ENCODE measurements at regions of chr2 and their contacts with region 1.

Region 1: GRCh38 chr2:27016801-27017325 is 15.9 kb upstream of the TMEM214 start:
- DNase-seq: peak; percentile 77
- ATAC-seq: peak; percentile 62
- H3K4me3 ChIP-seq: no peak overlapping the region
- H3K27ac ChIP-seq: no peak overlapping the region
- H3K4me1 ChIP-seq: peaks cover 18% of the 10 kb centered on the region
- H3K27me3 ChIP-seq: no peaks in the 10 kb centered on the region
- CTCF ChIP-seq: peak; percentile 83
- POLR2A ChIP-seq: no peak
- RAD21 ChIP-seq: peak; percentile 92

Region 2: DNA sequence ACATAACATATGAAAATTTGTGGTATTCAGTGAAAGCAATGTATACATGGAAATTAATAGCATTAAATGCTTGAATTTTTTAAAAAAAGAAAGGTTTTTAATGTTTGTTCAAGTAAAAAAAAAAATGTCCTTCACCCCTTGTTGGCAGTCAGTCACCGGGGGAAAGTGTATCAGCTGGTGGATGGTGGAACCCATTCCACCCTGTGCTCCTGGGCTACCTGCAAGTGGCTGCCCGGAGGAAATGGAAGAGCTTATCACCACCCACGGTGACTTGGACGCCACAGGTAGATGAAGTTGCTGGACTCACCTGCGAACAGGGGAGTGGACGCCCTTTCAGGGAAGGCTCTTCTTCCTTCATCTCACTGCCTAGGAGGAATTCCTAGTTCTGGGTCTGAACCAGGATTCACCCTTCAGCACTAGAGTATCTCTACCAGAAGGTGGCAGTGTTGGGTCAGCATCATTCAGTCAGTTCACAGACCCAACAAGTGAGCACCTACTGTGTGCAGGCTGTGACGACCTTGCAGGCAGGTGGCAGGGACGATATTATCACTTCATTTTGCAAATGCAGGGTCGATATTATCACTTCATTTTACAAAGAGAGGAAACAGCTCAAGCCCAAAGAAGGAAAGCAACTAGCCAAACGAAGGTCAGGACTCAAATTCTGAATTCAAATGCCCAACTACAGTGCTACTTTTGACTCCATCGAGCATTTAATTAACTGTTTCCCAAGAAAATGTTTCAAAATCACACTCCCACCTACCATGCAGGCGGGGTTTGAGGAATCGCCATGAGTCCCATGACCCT is 411.5 kb before region 1 on chr2:
- CTCF ChIA-PET with region 1: no interaction called
- POLR2A ChIA-PET with region 1: no interaction called
- dilution Hi-C with region 1: no loop called
- in situ Hi-C with region 1: no loop called
- intact Hi-C with region 1: loop called (anchors 5 kb)
- DNase-seq: peak; percentile 48
- ATAC-seq: peak; percentile 72
- H3K4me3 ChIP-seq: no peak overlapping the region
- H3K27ac ChIP-seq: no peak overlapping the region
- H3K4me1 ChIP-seq: no peaks in the 10 kb centered on the region
- H3K27me3 ChIP-seq: peaks cover 41% of the 10 kb centered on the region
- CTCF ChIP-seq: peak; percentile 75
- POLR2A ChIP-seq: no peak
- RAD21 ChIP-seq: peak; percentile 84

Region 3: GRCh38 chr2:26840937-26841613 is 175.8 kb before region 1 on chr2:
- CTCF ChIA-PET with region 1: interaction called, 13 read pairs
- POLR2A ChIA-PET with region 1: no interaction called
- dilution Hi-C with region 1: no loop called
- in situ Hi-C with region 1: loop called (anchors 5 kb)
- intact Hi-C with region 1: loop called (anchors 1 kb)
- DNase-seq: no peak
- ATAC-seq: no peak
- H3K4me3 ChIP-seq: no peak overlapping the region
- H3K27ac ChIP-seq: no peak overlapping the region
- H3K4me1 ChIP-seq: no peaks in the 10 kb centered on the region
- H3K27me3 ChIP-seq: peaks cover 45% of the 10 kb centered on the region
- CTCF ChIP-seq: no peak
- POLR2A ChIP-seq: no peak
- RAD21 ChIP-seq: no peak

Region 4: GRCh38 chr2:26846328-26847306 is 170.2 kb before region 1 on chr2:
- CTCF ChIA-PET with region 1: interaction called, 13 read pairs
- POLR2A ChIA-PET with region 1: no interaction called
- dilution Hi-C with region 1: no loop called
- in situ Hi-C with region 1: loop called (anchors 5 kb)
- intact Hi-C with region 1: loop called (anchors 1 kb)
- DNase-seq: peak; percentile 69
- ATAC-seq: peak; percentile 93
- H3K4me3 ChIP-seq: no peak overlapping the region
- H3K27ac ChIP-seq: no peak overlapping the region
- H3K4me1 ChIP-seq: no peaks in the 10 kb centered on the region
- H3K27me3 ChIP-seq: peaks cover 81% of the 10 kb centered on the region
- CTCF ChIP-seq: peak; percentile 92
- POLR2A ChIP-seq: no peak
- RAD21 ChIP-seq: peak; percentile 84

Region 5: GRCh38 chr2:26959331-26959730 is 57.5 kb before region 1 on chr2:
- CTCF ChIA-PET with region 1: interaction called, 37 read pairs
- POLR2A ChIA-PET with region 1: interaction called, 3 read pairs
- dilution Hi-C with region 1: no loop called
- in situ Hi-C with region 1: loop called (anchors 5 kb)
- intact Hi-C with region 1: loop called (anchors 1 kb)
- DNase-seq: no peak
- ATAC-seq: no peak
- H3K4me3 ChIP-seq: no peak overlapping the region
- H3K27ac ChIP-seq: no peak overlapping the region
- H3K4me1 ChIP-seq: no peaks in the 10 kb centered on the region
- H3K27me3 ChIP-seq: peaks cover 41% of the 10 kb centered on the region
- CTCF ChIP-seq: no peak
- POLR2A ChIP-seq: no peak
- RAD21 ChIP-seq: no peak

Region 6: DNA sequence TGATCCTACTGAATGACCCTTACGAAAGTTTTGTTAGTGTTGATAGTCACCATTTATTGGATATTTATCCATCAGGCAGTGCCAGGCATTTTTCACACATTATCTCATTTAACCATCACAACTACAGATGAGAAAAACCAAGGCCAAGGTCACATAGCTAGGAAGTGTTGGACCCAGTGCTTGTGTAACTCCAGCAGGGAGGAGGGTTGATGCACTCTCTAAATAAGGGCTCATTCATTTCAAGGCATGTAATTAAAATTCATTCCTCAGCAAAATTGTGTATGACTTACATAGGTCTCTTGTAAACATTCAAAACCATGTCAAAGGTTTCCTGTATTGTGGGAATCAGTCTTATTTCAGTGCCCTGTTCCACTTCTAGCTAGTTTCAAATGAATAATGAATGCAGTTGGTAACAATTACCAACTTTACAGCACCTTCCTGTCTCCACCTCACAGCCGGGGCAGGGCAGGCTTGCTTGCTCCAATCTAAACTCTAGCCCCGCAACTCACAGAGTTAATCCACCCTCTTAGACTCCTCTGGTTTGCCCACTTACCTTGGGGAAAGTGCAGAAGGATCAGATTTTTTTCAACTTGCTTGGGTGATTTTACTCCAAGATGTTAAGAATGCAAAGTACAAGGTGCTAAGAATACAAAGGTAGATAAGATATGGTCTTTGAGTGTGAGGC is 52.3 kb before region 1 on chr2:
- CTCF ChIA-PET with region 1: interaction called, 37 read pairs
- POLR2A ChIA-PET with region 1: interaction called, 3 read pairs
- dilution Hi-C with region 1: no loop called
- in situ Hi-C with region 1: loop called (anchors 5 kb)
- intact Hi-C with region 1: loop called (anchors 1 kb)
- DNase-seq: no peak
- ATAC-seq: no peak
- H3K4me3 ChIP-seq: no peak overlapping the region
- H3K27ac ChIP-seq: no peak overlapping the region
- H3K4me1 ChIP-seq: 0 out of 2 replicates have a peak, but pooled peaks cover 2% of the 10 kb centered on the region
- H3K27me3 ChIP-seq: peaks cover 14% of the 10 kb centered on the region
- CTCF ChIP-seq: no peak
- POLR2A ChIP-seq: no peak
- RAD21 ChIP-seq: no peak

Region 7: GRCh38 chr2:27050281-27050995 is 33.6 kb after region 1 on chr2:
- CTCF ChIA-PET with region 1: no interaction called
- POLR2A ChIA-PET with region 1: no interaction called
- dilution Hi-C with region 1: no loop called
- in situ Hi-C with region 1: no loop called
- intact Hi-C with region 1: no loop called
- DNase-seq: peak; percentile 98
- ATAC-seq: peak; percentile 83
- H3K4me3 ChIP-seq: peak overlapping the region; percentile 78
- H3K27ac ChIP-seq: peak overlapping the region; percentile 27
- H3K4me1 ChIP-seq: peaks cover 5% of the 10 kb centered on the region
- H3K27me3 ChIP-seq: no peaks in the 10 kb centered on the region
- CTCF ChIP-seq: peak; percentile 41
- POLR2A ChIP-seq: peak; percentile 98
- RAD21 ChIP-seq: no peak; the same call in 1 of the 2 replicates

Measured in IMR-90 (cell line).